ENCODE measurements at regions of chr1 and their contacts with region 1.

Region 1: GRCh38 chr1:36297062-36297461 is 9.1 kb upstream of the SH3D21 start:
- DNase-seq: no peak
- H3K4me3 ChIP-seq: no peak overlapping the region
- H3K27ac ChIP-seq: no peak overlapping the region
- H3K4me1 ChIP-seq: peaks cover 6 to 16% (median 14%) of the 10 kb centered on the region in 4 donors
- H3K27me3 ChIP-seq: no peaks in the 10 kb centered on the region
- CTCF ChIP-seq: no peak
- EP300 ChIP-seq: no peak
- POLR2A ChIP-seq: no peak

Region 2: DNA sequence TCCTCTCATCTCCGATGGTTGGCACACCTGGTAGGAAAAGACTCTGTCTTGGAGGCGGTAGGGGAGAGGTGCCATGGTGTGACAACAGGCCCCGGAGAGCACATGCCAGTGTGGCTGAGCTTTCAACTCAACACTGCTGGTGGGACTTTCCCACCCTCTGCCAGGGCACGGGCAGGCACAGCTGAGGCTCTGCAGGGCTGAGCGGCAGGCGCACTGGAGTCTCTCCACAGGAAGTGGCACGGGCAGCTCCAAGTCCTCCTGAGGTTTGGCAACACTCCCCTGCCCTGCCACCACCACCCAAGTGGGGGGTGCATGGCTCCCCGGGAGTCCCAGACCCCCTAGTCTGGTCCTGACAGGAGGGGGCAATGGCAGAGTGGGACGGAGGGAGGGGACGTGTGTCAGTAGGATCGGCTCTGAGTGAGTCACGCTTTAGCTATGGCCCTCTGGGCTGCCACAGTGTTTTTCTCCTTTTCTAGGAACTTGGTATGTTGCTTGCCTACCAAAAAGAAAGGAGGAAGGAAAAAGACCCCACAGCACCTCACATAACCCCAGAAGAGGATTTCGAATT is 53.7 kb after region 1 on chr1:
- intact Hi-C with region 1: loop called (anchors 2 kb)
- DNase-seq: no peak
- H3K4me3 ChIP-seq: peak overlapping the region; percentile 6 to 41 (median 18)
- H3K27ac ChIP-seq: peak overlapping the region; percentile 66 to 78 (median 68)
- H3K4me1 ChIP-seq: peaks cover 28 to 46% (median 42%) of the 10 kb centered on the region in 4 donors
- H3K27me3 ChIP-seq: no peaks in the 10 kb centered on the region
- CTCF ChIP-seq: no peak
- EP300 ChIP-seq: no peak
- POLR2A ChIP-seq: no peak

Region 3: GRCh38 chr1:36369061-36369861 is 72.2 kb after region 1 on chr1:
- intact Hi-C with region 1: no loop called
- DNase-seq: peak; percentile 96
- H3K4me3 ChIP-seq: no peak overlapping the region
- H3K27ac ChIP-seq: no peak overlapping the region
- H3K4me1 ChIP-seq: peaks cover 63 to 80% (median 72%) of the 10 kb centered on the region in 4 donors
- H3K27me3 ChIP-seq: no peaks in the 10 kb centered on the region
- CTCF ChIP-seq: peak; percentile 90 to 97 (median 92)
- EP300 ChIP-seq: no peak
- POLR2A ChIP-seq: no peak

Region 4: DNA sequence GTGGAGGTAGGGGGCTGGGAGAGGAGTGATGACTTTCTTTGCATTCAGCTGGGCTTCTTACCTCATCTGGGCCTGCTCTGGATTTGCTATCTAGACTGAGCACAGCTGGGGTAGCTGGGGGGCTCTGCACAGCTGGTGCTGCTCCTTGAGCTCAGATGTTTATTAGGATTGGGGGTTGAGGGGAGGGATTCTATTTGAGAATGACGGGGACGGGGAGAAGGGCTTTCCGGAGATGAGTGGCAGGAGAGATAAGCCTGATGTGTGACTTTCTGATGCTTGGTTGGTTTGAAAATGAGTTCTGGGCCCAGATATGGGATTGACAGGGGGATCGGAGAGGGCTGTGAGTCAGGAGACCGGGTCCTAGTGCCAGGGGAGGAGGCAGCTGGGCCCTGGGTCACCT is 331.7 kb after region 1 on chr1:
- intact Hi-C with region 1: no loop called
- DNase-seq: no peak
- H3K4me3 ChIP-seq: no peak overlapping the region
- H3K27ac ChIP-seq: no peak overlapping the region
- H3K4me1 ChIP-seq: no peaks in the 10 kb centered on the region
- H3K27me3 ChIP-seq: peaks cover 0 to 58% (median 3%) of the 10 kb centered on the region in 4 donors
- CTCF ChIP-seq: no peak
- EP300 ChIP-seq: no peak
- POLR2A ChIP-seq: no peak